ENCODE measurements at regions of chr11 and their contacts with region 1.

Region 1: DNA sequence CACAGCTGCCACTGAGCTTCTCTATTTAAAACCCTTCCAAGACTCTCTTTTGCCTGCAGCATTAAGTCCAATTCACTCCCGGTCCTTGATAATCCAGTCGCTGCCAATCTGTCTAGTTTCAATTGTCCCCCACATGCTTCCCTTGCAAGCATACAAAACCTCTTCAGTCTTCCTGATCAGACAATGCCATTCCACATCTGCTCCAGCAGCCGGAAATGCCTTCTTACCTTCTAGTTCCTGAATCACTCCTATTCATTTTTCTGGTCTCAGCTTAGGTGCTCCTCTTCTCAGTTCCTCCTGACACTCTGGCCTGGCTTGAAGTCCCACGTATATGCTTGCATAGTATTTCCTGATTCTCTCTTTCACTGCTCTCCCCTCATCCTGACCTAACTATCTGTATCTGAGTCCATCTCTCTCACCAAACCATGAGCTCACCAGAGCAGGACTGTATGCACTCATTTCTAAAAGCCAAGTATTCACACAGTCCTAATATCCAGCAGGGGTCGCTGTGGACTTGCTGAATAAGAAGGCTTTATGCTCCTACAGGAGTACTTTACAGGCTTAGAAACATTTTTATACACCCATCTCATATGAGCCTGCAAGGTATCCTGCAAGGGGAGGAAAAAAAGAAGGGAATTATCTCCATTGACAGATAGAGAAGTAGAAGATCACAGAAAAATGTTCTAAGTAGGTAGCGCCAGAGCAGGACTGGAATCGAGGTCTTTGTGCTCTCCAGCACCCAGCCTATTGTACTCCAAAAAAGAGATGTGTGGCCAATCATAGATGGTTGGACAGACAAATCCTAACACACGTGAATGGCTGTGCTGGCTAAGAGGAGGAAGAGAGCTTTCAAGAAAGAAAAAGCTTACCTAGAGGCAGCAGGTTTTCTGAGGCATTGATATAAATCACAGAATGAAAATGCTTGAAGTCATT is 19.2 kb downstream of the XRRA1 start:
- DNase-seq: no peak
- H3K4me3 ChIP-seq: no peak overlapping the region
- H3K27ac ChIP-seq: no peak overlapping the region
- H3K4me1 ChIP-seq: peaks cover 0 to 6% (median 0%) of the 10 kb centered on the region in 6 donors
- H3K27me3 ChIP-seq: no peaks in the 10 kb centered on the region
- CTCF ChIP-seq: peak; percentile 77 to 90 (median 86)
- POLR2A ChIP-seq: no peak

Region 2: DNA sequence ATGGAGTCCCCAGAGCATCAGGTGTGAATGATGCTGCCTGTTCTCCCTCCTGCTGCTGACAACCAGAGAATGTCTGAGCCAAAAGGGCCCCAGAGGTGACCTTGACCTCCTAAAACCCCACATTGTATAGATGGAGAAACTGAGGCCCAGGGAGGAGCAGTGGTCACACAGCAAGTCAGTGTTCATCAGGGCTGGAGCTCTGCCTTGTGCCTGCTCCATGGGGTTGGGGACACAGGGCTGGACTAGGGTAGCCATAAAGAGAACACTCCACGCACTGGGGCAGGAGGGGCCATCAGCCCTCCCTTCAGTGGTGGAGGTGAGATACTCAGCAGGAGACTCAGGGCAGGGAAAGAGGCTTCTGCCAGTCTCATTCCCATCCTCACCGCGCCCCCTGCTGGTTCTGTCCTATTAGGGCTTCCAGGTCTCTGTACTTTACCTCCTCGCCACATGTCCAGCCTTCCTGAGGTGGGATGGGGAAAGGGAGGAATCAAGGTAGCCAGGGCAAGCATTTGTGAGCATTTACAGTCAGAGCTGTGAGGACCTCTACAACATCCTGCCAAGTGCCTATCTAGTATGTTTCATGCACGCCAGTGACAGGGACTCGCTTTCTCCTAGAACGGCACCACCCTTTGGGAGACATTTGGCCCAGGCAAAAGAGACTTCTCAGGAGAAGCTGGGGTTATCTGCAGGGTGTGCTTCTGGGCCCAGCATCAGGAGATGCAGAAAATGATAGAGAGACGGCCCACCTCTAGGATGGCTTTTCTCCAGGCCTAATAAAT is 102.3 kb after region 1 on chr11:
- intact Hi-C with region 1: loop called (anchors 5 kb)
- DNase-seq: peak; percentile 85
- H3K4me3 ChIP-seq: no peak overlapping the region
- H3K27ac ChIP-seq: no peak overlapping the region
- H3K4me1 ChIP-seq: peaks cover 0 to 10% (median 0%) of the 10 kb centered on the region in 6 donors
- H3K27me3 ChIP-seq: no peaks in the 10 kb centered on the region
- CTCF ChIP-seq: peak in 10 of 11 experiments; percentile 24 to 74 (median 62)
- POLR2A ChIP-seq: no peak

Region 3: DNA sequence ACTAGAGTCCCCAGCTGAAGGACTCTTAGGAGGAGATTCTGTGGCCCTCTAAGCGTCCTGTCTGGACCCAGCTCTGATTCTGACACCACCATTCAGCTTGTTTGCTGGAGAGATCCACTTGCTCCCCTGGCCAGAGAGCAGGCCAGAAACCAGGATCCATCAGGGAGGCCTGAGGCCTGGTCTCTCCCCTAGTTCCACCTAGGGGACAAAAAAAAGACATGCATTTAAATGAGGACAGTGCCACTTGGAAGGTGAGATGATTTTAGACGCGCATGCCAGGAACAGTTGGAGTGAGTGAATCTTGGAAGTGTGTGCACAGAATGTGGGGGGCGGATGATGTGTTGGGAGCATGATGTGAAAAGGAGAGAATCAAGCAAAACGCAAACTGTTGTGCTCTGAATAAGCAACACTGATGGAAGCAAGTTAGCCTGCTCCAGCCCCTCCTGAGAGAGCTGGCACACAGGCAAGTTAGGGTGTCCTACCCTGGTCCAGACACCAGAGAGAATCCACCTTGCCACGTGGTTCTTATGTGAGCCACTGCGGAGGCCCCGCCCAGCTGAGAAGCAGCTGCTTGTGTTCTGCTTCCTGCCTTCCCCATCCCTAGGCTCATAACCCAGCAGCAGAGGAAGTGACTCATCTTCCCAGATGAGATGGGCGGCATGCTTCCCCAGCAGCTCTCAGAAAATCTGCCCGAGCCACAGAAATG is 213.2 kb after region 1 on chr11:
- intact Hi-C with region 1: loop called (anchors 10 kb)
- DNase-seq: peak; percentile 87
- H3K4me3 ChIP-seq: no peak overlapping the region
- H3K27ac ChIP-seq: peak overlapping the region in 6 of 8 donors; percentile 44 to 69 (median 58)
- H3K4me1 ChIP-seq: peaks cover 12 to 49% (median 32%) of the 10 kb centered on the region in 6 donors
- H3K27me3 ChIP-seq: peaks cover 0 to 4% (median 0%) of the 10 kb centered on the region in 7 donors
- CTCF ChIP-seq: peak in 4 of 11 experiments; percentile 6 to 29 (median 14)
- POLR2A ChIP-seq: no peak

Region 4: DNA sequence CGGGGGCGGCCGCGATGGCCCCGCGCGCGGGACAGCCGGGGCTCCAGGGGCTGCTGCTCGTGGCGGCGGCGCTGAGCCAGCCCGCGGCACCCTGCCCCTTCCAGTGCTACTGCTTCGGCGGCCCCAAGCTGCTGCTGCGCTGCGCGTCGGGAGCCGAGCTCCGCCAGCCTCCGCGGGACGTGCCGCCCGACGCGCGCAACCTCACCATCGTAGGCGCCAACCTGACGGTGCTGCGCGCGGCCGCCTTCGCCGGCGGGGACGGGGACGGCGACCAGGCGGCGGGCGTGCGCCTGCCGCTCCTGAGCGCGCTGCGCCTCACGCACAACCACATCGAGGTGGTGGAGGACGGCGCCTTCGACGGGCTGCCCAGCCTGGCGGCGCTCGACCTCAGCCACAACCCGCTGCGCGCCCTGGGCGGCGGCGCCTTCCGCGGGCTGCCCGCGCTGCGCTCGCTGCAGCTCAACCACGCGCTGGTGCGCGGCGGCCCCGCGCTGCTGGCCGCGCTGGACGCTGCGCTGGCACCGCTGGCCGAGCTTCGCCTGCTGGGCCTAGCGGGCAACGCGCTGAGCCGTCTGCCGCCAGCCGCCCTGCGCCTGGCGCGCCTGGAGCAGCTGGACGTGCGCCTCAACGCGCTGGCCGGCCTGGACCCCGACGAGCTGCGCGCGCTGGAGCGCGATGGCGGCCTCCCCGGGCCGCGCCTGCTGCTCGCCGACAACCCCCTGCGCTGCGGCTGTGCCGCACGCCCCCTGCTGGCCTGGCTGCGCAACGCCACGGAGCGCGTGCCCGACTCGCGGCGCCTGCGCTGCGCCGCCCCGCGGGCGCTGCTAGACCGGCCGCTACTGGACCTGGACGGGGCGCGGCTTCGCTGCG is 311.6 kb after region 1 on chr11:
- intact Hi-C with region 1: loop called (anchors 10 kb)
- DNase-seq: peak; percentile 97
- H3K4me3 ChIP-seq: peak overlapping the region; percentile 6 to 84 (median 46)
- H3K27ac ChIP-seq: peak overlapping the region in 4 of 8 donors; percentile 17 to 50 (median 29)
- H3K4me1 ChIP-seq: peaks cover 0 to 25% (median 17%) of the 10 kb centered on the region in 6 donors
- H3K27me3 ChIP-seq: peaks cover 2 to 90% (median 50%) of the 10 kb centered on the region in 7 donors
- CTCF ChIP-seq: peak in 8 of 11 experiments; percentile 24 to 98 (median 94)
- POLR2A ChIP-seq: no peak

Region 5: GRCh38 chr11:75371941-75372789 is 442.5 kb after region 1 on chr11:
- intact Hi-C with region 1: loop called (anchors 10 kb)
- DNase-seq: peak; percentile 33
- H3K4me3 ChIP-seq: no peak overlapping the region
- H3K27ac ChIP-seq: peak overlapping the region in 1 of 8 donors; percentile 17
- H3K4me1 ChIP-seq: peaks cover 0 to 32% (median 14%) of the 10 kb centered on the region in 6 donors
- H3K27me3 ChIP-seq: no peaks in the 10 kb centered on the region
- CTCF ChIP-seq: no peak
- POLR2A ChIP-seq: no peak

Measured in spleen (tissue), 13 donors.